ENCODE measurements at regions of chr1 and their contacts with region 1.

Region 1: GRCh38 chr1:233113009-233113879 is 162.8 kb downstream of the NTPCR start:
- DNase-seq: peak; percentile 89
- H3K4me3 ChIP-seq: peak overlapping the region in 1 of 3 experiments; percentile 6
- H3K27ac ChIP-seq: peak overlapping the region; percentile 89
- H3K4me1 ChIP-seq: peaks cover 32% of the 10 kb centered on the region
- H3K27me3 ChIP-seq: no peaks in the 10 kb centered on the region
- CTCF ChIP-seq: no peak
- POLR2A ChIP-seq: no peak

Region 2: GRCh38 chr1:232813760-232814159 is 299.5 kb before region 1 on chr1:
- CTCF ChIA-PET with region 1: no interaction called
- POLR2A ChIA-PET with region 1: no interaction called
- dilution Hi-C with region 1: no loop called
- intact Hi-C with region 1: loop called (anchors 5 kb)
- DNase-seq: no peak
- H3K4me3 ChIP-seq: no peak overlapping the region
- H3K27ac ChIP-seq: no peak overlapping the region
- H3K4me1 ChIP-seq: no peaks in the 10 kb centered on the region
- H3K27me3 ChIP-seq: no peaks in the 10 kb centered on the region
- CTCF ChIP-seq: no peak
- POLR2A ChIP-seq: no peak

Region 3: DNA sequence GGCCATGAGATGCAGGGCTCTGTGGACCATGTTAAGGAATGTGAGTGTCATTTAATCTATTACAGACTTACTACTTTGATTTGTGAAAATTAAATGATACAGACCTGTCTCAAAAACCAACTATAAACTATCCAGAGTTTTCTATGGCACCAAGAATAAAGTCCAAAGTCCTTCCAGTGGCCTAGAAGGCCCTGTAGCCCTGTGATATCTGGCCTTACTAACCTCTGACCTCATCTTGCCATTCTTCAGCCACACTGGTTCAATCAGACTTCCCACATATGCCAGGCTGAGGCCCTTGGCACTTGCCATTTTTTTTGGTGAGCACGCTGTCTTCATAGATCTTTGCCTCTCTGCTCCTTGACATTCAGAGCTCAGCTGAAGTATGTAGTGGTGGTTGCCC is 155.2 kb before region 1 on chr1:
- CTCF ChIA-PET with region 1: no interaction called
- POLR2A ChIA-PET with region 1: no interaction called
- dilution Hi-C with region 1: no loop called
- intact Hi-C with region 1: no loop called
- DNase-seq: no peak
- H3K4me3 ChIP-seq: no peak overlapping the region
- H3K27ac ChIP-seq: no peak overlapping the region
- H3K4me1 ChIP-seq: peaks cover 15% of the 10 kb centered on the region
- H3K27me3 ChIP-seq: no peaks in the 10 kb centered on the region
- CTCF ChIP-seq: no peak
- POLR2A ChIP-seq: no peak

Region 4: GRCh38 chr1:233025157-233025915 is 87.9 kb before region 1 on chr1:
- CTCF ChIA-PET with region 1: interaction called, 5 read pairs
- POLR2A ChIA-PET with region 1: no interaction called
- dilution Hi-C with region 1: no loop called
- intact Hi-C with region 1: loop called (anchors 2 kb)
- DNase-seq: peak; percentile 68
- H3K4me3 ChIP-seq: no peak overlapping the region
- H3K27ac ChIP-seq: no peak overlapping the region
- H3K4me1 ChIP-seq: peaks cover 6% of the 10 kb centered on the region
- H3K27me3 ChIP-seq: no peaks in the 10 kb centered on the region
- CTCF ChIP-seq: peak; percentile 31 to 69
- POLR2A ChIP-seq: no peak

Region 5: GRCh38 chr1:233635765-233636502 is 522.7 kb after region 1 on chr1:
- CTCF ChIA-PET with region 1: no interaction called
- POLR2A ChIA-PET with region 1: no interaction called
- dilution Hi-C with region 1: no loop called
- intact Hi-C with region 1: no loop called
- DNase-seq: no peak
- H3K4me3 ChIP-seq: no peak overlapping the region
- H3K27ac ChIP-seq: no peak overlapping the region
- H3K4me1 ChIP-seq: no peaks in the 10 kb centered on the region
- H3K27me3 ChIP-seq: no peaks in the 10 kb centered on the region
- CTCF ChIP-seq: no peak
- POLR2A ChIP-seq: no peak